HAP-1 (cell line): ENCODE measurements at regions of chr3 and their contacts with region 1.

Region 1: DNA sequence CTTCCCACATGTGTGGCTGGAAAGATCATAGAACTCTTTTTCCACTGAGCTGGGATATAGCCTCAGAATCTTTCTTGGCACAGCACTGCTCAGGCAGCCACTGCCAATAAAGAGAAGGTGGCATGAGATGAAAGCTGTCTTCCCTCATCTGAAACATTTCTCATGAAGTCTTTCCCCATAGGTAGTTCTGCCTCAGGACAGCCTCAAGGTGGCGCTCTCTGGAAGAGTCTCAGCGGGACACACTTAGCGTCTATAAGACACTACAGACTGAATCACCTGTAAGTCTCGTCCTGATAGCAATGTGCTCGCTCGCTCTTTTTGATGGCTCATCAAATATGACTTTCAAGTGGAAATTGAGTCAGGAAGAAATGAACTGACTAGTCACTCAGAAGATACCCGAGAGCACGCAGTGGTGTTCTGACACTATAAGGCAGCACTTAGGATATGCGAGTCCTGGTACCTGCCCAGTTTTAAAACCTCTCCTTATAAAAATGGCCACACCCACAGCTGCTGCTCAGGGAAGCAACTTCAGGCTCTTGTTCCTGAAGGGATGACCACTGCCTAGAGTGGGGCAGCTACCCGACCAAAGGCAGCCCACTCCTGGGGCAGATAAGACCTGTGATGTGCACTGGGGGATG is 269.5 kb downstream of the SUCLG2 start:
- DNase-seq: peak; percentile 50 to 80
- H3K4me3 ChIP-seq: no peak overlapping the region
- H3K4me1 ChIP-seq: no peaks in the 10 kb centered on the region
- H3K27me3 ChIP-seq: no peaks in the 10 kb centered on the region

Region 2: DNA sequence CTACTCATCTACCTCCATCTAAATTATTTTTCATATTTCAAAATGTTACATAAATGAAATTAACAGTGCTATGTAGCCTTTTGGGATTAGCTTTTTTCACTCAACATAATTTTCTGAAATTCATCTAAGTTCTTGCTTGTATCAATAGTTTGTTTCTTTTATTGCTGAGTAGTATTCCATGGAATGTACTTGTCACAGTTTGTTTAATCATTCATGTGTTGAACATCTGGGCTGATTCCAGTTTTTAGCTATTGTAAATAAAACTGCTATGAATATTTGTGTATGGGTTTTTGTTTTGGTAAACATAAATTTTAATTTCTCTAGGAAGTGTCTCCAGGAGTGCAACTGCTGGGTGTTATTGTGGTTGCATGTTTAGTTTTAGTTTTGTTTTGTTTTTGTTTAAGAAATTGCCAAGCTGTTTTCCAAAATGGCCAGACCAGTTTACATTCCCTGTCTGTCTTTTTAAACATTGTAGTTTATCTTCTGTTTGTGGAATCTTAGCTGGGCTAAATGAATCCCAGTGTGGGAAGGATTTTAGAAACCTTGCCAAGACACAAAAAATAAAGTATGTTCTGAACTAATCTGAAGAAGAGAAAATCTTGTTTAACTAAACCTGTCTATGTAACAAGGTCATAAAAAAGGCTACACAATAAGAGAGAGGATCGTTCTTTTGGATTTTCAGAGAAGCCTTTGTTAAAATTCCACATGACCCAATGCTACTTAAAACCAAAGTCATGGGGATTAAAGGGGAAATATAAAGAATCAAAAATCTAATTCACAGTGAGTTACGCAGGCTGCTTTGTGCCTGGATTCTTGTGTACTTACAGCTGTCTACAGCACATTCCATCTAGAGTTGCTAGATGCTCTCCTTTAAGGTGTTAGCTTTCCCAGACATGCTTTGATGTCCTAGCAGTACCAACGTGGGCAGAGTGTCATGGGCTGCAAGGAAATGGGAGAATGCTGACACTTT is 398.7 kb after region 1 on chr3:
- in situ Hi-C with region 1: loop called (anchors 10 kb)
- DNase-seq: peak in 1 of 2 experiments; percentile 3
- H3K4me3 ChIP-seq: no peak overlapping the region
- H3K4me1 ChIP-seq: no peaks in the 10 kb centered on the region
- H3K27me3 ChIP-seq: no peaks in the 10 kb centered on the region